ENCODE measurements at regions of chr20 and their contacts with region 1.

Region 1: DNA sequence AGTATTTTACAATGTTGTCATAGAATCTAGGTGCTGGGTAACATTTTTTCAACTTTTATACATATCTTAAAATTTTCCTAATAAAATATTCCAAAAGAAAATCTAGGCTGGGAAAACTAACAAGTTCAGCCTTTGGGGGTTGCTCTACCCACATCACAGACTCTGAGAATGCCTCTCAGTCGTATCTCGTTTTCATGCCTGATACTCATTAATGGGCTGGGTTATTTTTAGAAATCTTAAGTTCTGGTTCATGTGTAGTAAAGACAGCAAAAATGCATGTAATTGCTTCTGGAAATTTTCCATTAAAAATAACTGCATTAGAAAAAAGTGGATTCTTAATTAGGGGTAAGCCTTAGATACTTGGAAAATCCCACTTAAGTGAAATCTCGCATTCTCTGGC is 149.3 kb downstream of the SLC24A3 start:
- DNase-seq: no peak
- H3K4me3 ChIP-seq: no peak overlapping the region
- H3K4me3 Mint-ChIP-seq: no peak overlapping the region
- H3K27ac Mint-ChIP-seq: no peak overlapping the region
- H3K4me1 ChIP-seq: no peaks in the 10 kb centered on the region
- H3K4me1 Mint-ChIP-seq: no peaks in the 10 kb centered on the region
- H3K27me3 ChIP-seq: no peaks in the 10 kb centered on the region
- H3K27me3 Mint-ChIP-seq: peaks cover 6% of the 10 kb centered on the region
- CTCF ChIP-seq: no peak

Region 2: DNA sequence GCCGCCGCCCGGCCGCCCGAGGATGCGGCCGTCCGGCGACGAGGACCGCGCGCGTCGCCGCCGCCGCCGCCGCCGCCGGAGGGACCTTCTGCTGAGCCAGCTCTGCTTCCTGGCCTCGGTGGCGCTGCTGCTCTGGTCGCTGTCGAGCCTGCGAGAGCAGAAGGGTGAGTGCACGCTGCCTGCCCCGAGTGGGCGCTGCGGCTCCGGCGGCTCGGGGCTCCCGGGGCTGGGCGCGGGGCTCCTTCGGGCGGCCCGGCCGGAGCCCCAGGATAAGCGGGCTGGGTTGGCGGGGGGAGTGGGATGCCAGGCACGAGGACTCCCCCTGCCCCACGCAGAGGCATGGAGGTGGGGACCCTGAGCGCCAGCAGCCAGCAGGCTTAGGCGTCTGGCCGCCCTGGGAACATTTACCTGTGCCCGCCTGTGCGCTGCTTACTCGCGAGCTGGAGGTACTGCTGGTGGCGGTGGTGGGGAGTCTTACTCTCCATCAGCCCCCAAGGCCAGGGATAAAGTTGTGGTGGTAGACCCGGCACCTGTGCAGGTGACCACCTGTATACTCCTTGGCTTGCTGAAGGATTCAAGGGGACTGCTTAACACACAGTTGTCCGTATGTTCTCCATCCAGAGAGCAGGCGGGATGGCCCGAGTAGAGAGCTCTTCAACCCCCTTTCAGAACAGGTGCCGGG is 148.8 kb before region 1 on chr20:
- CTCF ChIA-PET with region 1: no interaction called
- POLR2A ChIA-PET with region 1: no interaction called
- intact Hi-C with region 1: loop called (anchors 5 kb)
- DNase-seq: peak; percentile 72 to 81
- H3K4me3 ChIP-seq: peak overlapping the region; percentile 59
- H3K4me3 Mint-ChIP-seq: peak overlapping the region; percentile 67
- H3K27ac Mint-ChIP-seq: no peak overlapping the region
- H3K4me1 ChIP-seq: no peaks in the 10 kb centered on the region; the same call in 1 of the 2 replicates
- H3K4me1 Mint-ChIP-seq: no peaks in the 10 kb centered on the region
- H3K27me3 ChIP-seq: 0 out of 2 replicates have a peak, but pooled peaks cover 1% of the 10 kb centered on the region
- H3K27me3 Mint-ChIP-seq: peaks cover 24% of the 10 kb centered on the region
- CTCF ChIP-seq: peak; percentile 40 to 67

Region 3: DNA sequence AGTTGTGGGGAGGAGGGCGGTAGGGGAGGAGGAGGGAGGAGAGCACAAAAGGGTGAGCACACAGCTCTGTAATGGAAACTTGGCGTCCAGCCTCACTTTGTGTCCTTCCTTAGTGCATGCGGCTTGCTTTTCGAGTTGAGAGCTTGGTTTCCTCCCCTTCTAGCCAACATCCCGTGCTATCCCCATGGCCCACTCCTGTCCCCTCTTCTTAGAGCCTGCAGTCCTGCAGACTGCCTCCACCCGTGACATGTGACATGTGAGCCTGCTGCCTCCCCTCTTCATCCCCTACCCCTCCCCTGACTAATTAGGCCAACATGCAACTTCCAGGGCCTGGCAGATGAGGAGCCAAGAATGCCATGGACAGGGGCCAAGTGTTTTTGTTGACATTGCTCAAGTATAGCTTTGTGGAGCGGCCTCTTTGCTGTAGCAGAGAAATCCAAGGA is 86.1 kb before region 1 on chr20:
- CTCF ChIA-PET with region 1: no interaction called
- POLR2A ChIA-PET with region 1: no interaction called
- intact Hi-C with region 1: no loop called
- DNase-seq: no peak
- H3K4me3 ChIP-seq: no peak overlapping the region
- H3K4me3 Mint-ChIP-seq: peak overlapping the region; percentile 61
- H3K27ac Mint-ChIP-seq: peak overlapping the region; percentile 90
- H3K4me1 ChIP-seq: peaks cover 57% of the 10 kb centered on the region
- H3K4me1 Mint-ChIP-seq: peaks cover 36% of the 10 kb centered on the region
- H3K27me3 ChIP-seq: no peaks in the 10 kb centered on the region
- H3K27me3 Mint-ChIP-seq: no peaks in the 10 kb centered on the region
- CTCF ChIP-seq: no peak